ENCODE measurements at regions of chr7 and their contacts with region 1.

Region 1: DNA sequence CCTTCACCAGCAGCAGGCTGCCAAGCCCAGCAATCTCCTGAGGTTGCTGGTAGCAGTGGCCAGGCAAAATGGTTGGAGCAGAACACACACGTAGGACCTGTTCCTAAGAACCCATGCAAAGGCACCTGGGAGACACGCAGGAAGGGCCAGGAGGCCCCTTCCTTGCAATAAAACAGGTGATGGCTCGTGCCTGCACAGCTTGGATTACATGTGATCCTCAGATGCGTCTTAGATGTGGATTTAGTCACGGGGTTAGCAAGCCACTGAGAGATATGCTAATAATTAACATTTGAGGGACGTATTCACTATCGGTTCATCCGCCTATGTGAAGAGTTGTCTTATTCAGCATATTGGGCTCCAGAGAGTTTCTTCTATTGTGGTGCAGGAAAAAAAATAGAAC is 4.6 kb upstream of the RHEB start:
- DNase-seq: no peak
- H3K4me3 ChIP-seq: no peak overlapping the region
- H3K27ac ChIP-seq: no peak overlapping the region
- H3K4me1 ChIP-seq: peaks cover 0 to 9% (median 6%) of the 10 kb centered on the region in 4 donors
- H3K27me3 ChIP-seq: no peaks in the 10 kb centered on the region
- CTCF ChIP-seq: no peak

Region 2: GRCh38 chr7:151542606-151543130 is 18.4 kb after region 1 on chr7:
- intact Hi-C with region 1: loop called (anchors 1 kb)
- DNase-seq: no peak
- H3K4me3 ChIP-seq: no peak overlapping the region
- H3K27ac ChIP-seq: no peak overlapping the region
- H3K4me1 ChIP-seq: peaks cover 0 to 19% (median 15%) of the 10 kb centered on the region in 4 donors
- H3K27me3 ChIP-seq: no peaks in the 10 kb centered on the region
- CTCF ChIP-seq: no peak

Region 3: DNA sequence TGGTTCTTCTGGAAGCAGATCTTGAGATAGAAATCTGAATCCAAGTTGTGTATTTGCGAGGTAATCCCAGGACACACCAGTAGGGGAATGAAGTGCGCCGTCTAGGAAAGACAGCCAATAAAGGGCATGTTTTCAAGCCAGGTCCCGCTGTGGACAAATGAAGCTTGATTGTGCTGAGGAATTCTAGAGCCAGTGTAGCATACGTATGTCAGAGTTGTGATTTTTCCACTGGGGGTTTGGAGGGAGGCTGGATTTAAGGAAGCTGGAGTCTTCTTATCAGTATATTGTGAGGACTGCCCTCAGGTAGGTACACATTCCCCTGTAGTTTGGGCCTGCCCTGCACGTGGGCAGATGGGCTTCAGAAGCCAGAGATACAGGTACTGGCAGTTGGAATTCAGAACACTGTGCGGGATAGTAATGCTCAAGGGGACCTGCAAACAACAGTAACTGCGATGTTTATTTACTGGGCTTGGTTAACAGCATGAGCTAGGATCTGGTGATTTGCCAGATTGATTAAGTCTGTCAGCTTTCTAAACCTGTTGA is 552.1 kb after region 1 on chr7:
- intact Hi-C with region 1: no loop called
- DNase-seq: no peak
- H3K4me3 ChIP-seq: no peak overlapping the region
- H3K27ac ChIP-seq: no peak overlapping the region
- H3K4me1 ChIP-seq: peaks cover 0 to 9% (median 1%) of the 10 kb centered on the region in 4 donors
- H3K27me3 ChIP-seq: no peaks in the 10 kb centered on the region
- CTCF ChIP-seq: no peak